IMR-90 (cell line): ENCODE measurements at regions of chr16 and their contacts with region 1.

Region 1: GRCh38 chr16:75471723-75472633 is 7.5 kb upstream of the TMEM170A start:
- DNase-seq: peak; percentile 64
- ATAC-seq: peak; percentile 100
- H3K4me3 ChIP-seq: no peak overlapping the region
- H3K27ac ChIP-seq: no peak overlapping the region
- H3K4me1 ChIP-seq: no peaks in the 10 kb centered on the region
- H3K27me3 ChIP-seq: peaks cover 7% of the 10 kb centered on the region; the same call in 1 of the 2 replicates
- CTCF ChIP-seq: peak; percentile 82
- POLR2A ChIP-seq: no peak
- RAD21 ChIP-seq: peak; percentile 84

Region 2: GRCh38 chr16:75519881-75520280 is 47.9 kb after region 1 on chr16:
- CTCF ChIA-PET with region 1: interaction called, 4 read pairs
- POLR2A ChIA-PET with region 1: no interaction called
- dilution Hi-C with region 1: no loop called
- in situ Hi-C with region 1: no loop called
- intact Hi-C with region 1: loop called (anchors 1 kb)
- DNase-seq: no peak
- ATAC-seq: no peak
- H3K4me3 ChIP-seq: no peak overlapping the region
- H3K27ac ChIP-seq: no peak overlapping the region
- H3K4me1 ChIP-seq: no peaks in the 10 kb centered on the region
- H3K27me3 ChIP-seq: no peaks in the 10 kb centered on the region
- CTCF ChIP-seq: no peak
- POLR2A ChIP-seq: no peak
- RAD21 ChIP-seq: no peak

Region 3: DNA sequence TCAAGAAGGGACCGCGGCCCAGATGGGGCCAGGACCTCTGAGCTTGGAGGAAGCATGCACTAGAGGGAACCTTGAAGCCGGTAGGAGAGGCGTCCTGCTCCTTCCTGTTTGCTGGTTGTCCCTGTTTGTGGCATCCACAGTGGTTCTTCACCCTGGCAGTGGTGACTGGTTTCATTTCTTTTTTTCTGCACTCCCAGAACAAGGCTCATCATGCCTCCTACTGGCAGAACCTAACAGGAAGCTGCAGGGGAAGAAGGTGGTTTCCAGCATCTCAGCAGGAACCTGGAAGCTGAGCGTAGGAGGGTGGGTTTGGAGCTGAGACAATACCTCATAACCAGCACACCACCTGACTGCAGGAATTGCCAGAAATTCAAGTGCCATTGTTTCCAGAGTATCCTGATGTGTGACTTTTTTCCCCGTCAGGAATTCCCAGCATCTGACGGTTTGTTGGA is 78.3 kb after region 1 on chr16:
- CTCF ChIA-PET with region 1: interaction called, 3 read pairs
- POLR2A ChIA-PET with region 1: no interaction called
- dilution Hi-C with region 1: no loop called
- in situ Hi-C with region 1: no loop called
- intact Hi-C with region 1: loop called (anchors 1 kb)
- DNase-seq: peak; percentile 43
- ATAC-seq: no peak; the same call in 1 of the 2 replicates
- H3K4me3 ChIP-seq: no peak overlapping the region
- H3K27ac ChIP-seq: no peak overlapping the region
- H3K4me1 ChIP-seq: no peaks in the 10 kb centered on the region
- H3K27me3 ChIP-seq: no peaks in the 10 kb centered on the region
- CTCF ChIP-seq: peak; percentile 47
- POLR2A ChIP-seq: no peak
- RAD21 ChIP-seq: peak; percentile 51

Region 4: GRCh38 chr16:75566040-75566810 is 94.2 kb after region 1 on chr16 and contains the start of gene GABARAPL2:
- CTCF ChIA-PET with region 1: interaction called, 5 read pairs
- POLR2A ChIA-PET with region 1: no interaction called
- dilution Hi-C with region 1: no loop called
- in situ Hi-C with region 1: no loop called
- intact Hi-C with region 1: loop called (anchors 5 kb)
- DNase-seq: peak; percentile 56
- ATAC-seq: peak; percentile 89
- H3K4me3 ChIP-seq: peak within 1 kb of the TSS; percentile 54
- H3K27ac ChIP-seq: peak within 1 kb of the TSS; percentile 83
- H3K4me1 ChIP-seq: peaks cover 4% of the 10 kb centered on the region; the same call in 1 of the 2 replicates
- H3K27me3 ChIP-seq: no peaks in the 10 kb centered on the region; the same call in 1 of the 2 replicates
- CTCF ChIP-seq: no peak
- POLR2A ChIP-seq: no peak
- RAD21 ChIP-seq: no peak
- total RNA-seq, gene GABARAPL2: 33.3 and 55.8 TPM in 2 replicates

Region 5: DNA sequence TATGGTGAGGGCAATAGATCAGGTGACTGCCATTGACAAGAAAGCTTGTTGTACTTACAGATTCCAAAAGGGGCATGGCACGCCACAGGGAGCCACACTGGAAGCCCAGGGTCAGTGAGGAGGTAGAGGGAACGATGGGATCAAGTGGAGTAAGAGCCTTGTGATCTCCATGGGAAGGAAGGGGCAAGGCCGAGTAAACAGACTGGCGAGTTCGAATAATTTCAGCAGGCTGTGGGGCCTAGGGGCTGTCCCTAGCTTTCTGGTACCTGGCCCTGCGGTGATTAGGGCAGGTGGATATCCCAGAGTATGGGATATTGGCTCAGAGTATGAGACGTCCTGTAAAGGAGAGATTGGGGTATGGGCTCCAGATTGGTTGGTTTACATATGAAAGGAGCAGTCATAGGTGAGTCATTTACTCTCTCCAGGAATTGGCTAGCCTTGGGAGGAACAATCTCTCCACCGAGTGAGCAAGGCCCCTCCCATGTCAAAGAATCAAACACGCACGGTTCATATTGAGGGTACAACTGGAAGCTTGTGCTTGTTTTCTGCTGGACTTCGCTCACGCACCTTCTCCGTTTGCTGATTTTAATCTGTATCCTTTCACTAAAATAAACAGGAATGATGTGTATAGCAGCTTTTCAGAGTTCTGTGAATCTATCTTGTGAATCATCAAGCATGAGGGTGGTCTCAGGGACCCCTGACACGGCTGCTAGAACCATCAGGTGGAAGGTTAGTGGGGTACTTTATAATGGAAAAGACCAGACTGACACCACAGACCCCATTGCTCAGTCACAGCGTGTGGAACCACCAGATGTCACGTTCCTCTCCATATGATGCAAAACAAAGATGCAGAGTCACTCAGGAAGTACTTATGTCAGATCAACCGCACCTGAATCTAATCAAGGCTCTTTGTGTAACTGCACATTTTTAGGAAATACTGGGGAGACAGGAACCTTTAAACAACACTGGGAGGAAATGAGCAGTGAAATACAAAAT is 122.1 kb after region 1 on chr16:
- CTCF ChIA-PET with region 1: interaction called, 3 read pairs
- POLR2A ChIA-PET with region 1: no interaction called
- dilution Hi-C with region 1: no loop called
- in situ Hi-C with region 1: no loop called
- intact Hi-C with region 1: loop called (anchors 1 kb)
- DNase-seq: peak; percentile 83
- ATAC-seq: peak; percentile 52; the same call in 1 of the 2 replicates
- H3K4me3 ChIP-seq: no peak overlapping the region
- H3K27ac ChIP-seq: no peak overlapping the region
- H3K4me1 ChIP-seq: peaks cover 6% of the 10 kb centered on the region
- H3K27me3 ChIP-seq: no peaks in the 10 kb centered on the region
- CTCF ChIP-seq: no peak
- POLR2A ChIP-seq: no peak
- RAD21 ChIP-seq: no peak

Region 6: GRCh38 chr16:75764154-75764768 is 292.3 kb after region 1 on chr16:
- CTCF ChIA-PET with region 1: interaction called, 5 read pairs
- POLR2A ChIA-PET with region 1: no interaction called
- dilution Hi-C with region 1: no loop called
- in situ Hi-C with region 1: loop called (anchors 5 kb)
- intact Hi-C with region 1: loop called (anchors 1 kb)
- DNase-seq: peak; percentile 70
- ATAC-seq: peak; percentile 98
- H3K4me3 ChIP-seq: no peak overlapping the region
- H3K27ac ChIP-seq: no peak overlapping the region
- H3K4me1 ChIP-seq: no peaks in the 10 kb centered on the region
- H3K27me3 ChIP-seq: peaks cover 3% of the 10 kb centered on the region; the same call in 1 of the 2 replicates
- CTCF ChIP-seq: peak; percentile 84
- POLR2A ChIP-seq: 0 out of 2 replicates have a peak, but pooled peaks have one; percentile 35
- RAD21 ChIP-seq: peak; percentile 93